ENCODE measurements at regions of chr12 and their contacts with region 1.

Region 1: GRCh38 chr12:56448860-56449621 is at the start of gene TIMELESS:
- DNase-seq: peak; percentile 92
- ATAC-seq: peak; percentile 97
- H3K4me3 Mint-ChIP-seq: peak within 1 kb of the TSS; percentile 81
- H3K27ac Mint-ChIP-seq: peak within 1 kb of the TSS; percentile 97
- H3K4me1 Mint-ChIP-seq: peaks cover 19% of the 10 kb centered on the region
- H3K27me3 Mint-ChIP-seq: no peaks in the 10 kb centered on the region
- total RNA-seq, gene TIMELESS: 46.3 to 47.3 TPM

Region 2: GRCh38 chr12:56127888-56128669 is 321.0 kb before region 1 on chr12 and contains the start of gene ESYT1:
- CTCF ChIA-PET with region 1: no interaction called
- POLR2A ChIA-PET with region 1: no interaction called
- intact Hi-C with region 1: loop called in 1 of 2 experiments (anchors 1 kb)
- DNase-seq: peak; percentile 98
- ATAC-seq: peak; percentile 96
- H3K4me3 Mint-ChIP-seq: peak within 1 kb of the TSS; percentile 93
- H3K27ac Mint-ChIP-seq: peak within 1 kb of the TSS; percentile 95
- H3K4me1 Mint-ChIP-seq: peaks cover 55% of the 10 kb centered on the region
- H3K27me3 Mint-ChIP-seq: no peaks in the 10 kb centered on the region
- total RNA-seq, gene ESYT1: 132 to 160 TPM

Region 3: GRCh38 chr12:56266693-56267442 is 182.2 kb before region 1 on chr12 and contains the start of gene COQ10A:
- CTCF ChIA-PET with region 1: interaction called, 3 read pairs
- POLR2A ChIA-PET with region 1: no interaction called
- intact Hi-C with region 1: loop called in 1 of 2 experiments (anchors 1 kb)
- DNase-seq: peak; percentile 90
- ATAC-seq: peak; percentile 90
- H3K4me3 Mint-ChIP-seq: peak within 1 kb of the TSS; percentile 89
- H3K27ac Mint-ChIP-seq: peak within 1 kb of the TSS; percentile 89
- H3K4me1 Mint-ChIP-seq: peaks cover 9% of the 10 kb centered on the region
- H3K27me3 Mint-ChIP-seq: no peaks in the 10 kb centered on the region
- total RNA-seq, gene COQ10A: 5.2 to 7.5 TPM

Region 4: GRCh38 chr12:56315622-56316473 is 133.2 kb before region 1 on chr12 and contains the start of gene CNPY2:
- CTCF ChIA-PET with region 1: no interaction called
- POLR2A ChIA-PET with region 1: interaction called, 6 read pairs
- intact Hi-C with region 1: loop called (anchors 1 to 5 kb)
- DNase-seq: peak; percentile 95
- ATAC-seq: peak; percentile 93
- H3K4me3 Mint-ChIP-seq: peak within 1 kb of the TSS; percentile 97
- H3K27ac Mint-ChIP-seq: peak within 1 kb of the TSS; percentile 95
- H3K4me1 Mint-ChIP-seq: peaks cover 18% of the 10 kb centered on the region
- H3K27me3 Mint-ChIP-seq: no peaks in the 10 kb centered on the region
- total RNA-seq, gene CNPY2: 77.4 to 82.6 TPM

Region 5: GRCh38 chr12:56461235-56462159 is 12.5 kb after region 1 on chr12:
- CTCF ChIA-PET with region 1: interaction called, 32 read pairs
- POLR2A ChIA-PET with region 1: interaction called, 4 read pairs
- intact Hi-C with region 1: loop called in 1 of 2 experiments (anchors 1 kb)
- DNase-seq: no peak
- ATAC-seq: no peak
- H3K4me3 Mint-ChIP-seq: no peak overlapping the region
- H3K27ac Mint-ChIP-seq: no peak overlapping the region
- H3K4me1 Mint-ChIP-seq: peaks cover 5% of the 10 kb centered on the region
- H3K27me3 Mint-ChIP-seq: no peaks in the 10 kb centered on the region

Measured in activated CD4-positive, alpha-beta T cell treated with anti-CD3 and anti-CD28 coated beads for 36 hours (primary cell).